Posterior cingulate gyrus (tissue), 11 donors: ENCODE measurements at regions of chr7 and their contacts with region 1.

Region 1: GRCh38 chr7:38795593-38795992 is 113.4 kb downstream of the VPS41 start:
- DNase-seq: no peak

Region 2: GRCh38 chr7:39517240-39517639 is 721.6 kb after region 1 on chr7:
- intact Hi-C with region 1: loop called (anchors 1 kb)
- DNase-seq: no peak